ENCODE measurements at regions of chr6 and their contacts with region 1.

Region 1: GRCh38 chr6:159693128-159693893 is at the start of gene SOD2:
- DNase-seq: peak; percentile 93
- H3K4me3 ChIP-seq: peak within 1 kb of the TSS; percentile 64 to 100 (median 86)
- H3K27ac ChIP-seq: peak within 1 kb of the TSS; percentile 93 to 100 (median 98)
- H3K4me1 ChIP-seq: peaks cover 0 to 59% (median 41%) of the 10 kb centered on the region in 4 donors
- H3K27me3 ChIP-seq: no peaks in the 10 kb centered on the region
- CTCF ChIP-seq: no peak
- EP300 ChIP-seq: no peak
- POLR2A ChIP-seq: peak; percentile 94 to 96
- total RNA-seq, gene SOD2: 171 to 1,498 (median 369) TPM

Region 2: DNA sequence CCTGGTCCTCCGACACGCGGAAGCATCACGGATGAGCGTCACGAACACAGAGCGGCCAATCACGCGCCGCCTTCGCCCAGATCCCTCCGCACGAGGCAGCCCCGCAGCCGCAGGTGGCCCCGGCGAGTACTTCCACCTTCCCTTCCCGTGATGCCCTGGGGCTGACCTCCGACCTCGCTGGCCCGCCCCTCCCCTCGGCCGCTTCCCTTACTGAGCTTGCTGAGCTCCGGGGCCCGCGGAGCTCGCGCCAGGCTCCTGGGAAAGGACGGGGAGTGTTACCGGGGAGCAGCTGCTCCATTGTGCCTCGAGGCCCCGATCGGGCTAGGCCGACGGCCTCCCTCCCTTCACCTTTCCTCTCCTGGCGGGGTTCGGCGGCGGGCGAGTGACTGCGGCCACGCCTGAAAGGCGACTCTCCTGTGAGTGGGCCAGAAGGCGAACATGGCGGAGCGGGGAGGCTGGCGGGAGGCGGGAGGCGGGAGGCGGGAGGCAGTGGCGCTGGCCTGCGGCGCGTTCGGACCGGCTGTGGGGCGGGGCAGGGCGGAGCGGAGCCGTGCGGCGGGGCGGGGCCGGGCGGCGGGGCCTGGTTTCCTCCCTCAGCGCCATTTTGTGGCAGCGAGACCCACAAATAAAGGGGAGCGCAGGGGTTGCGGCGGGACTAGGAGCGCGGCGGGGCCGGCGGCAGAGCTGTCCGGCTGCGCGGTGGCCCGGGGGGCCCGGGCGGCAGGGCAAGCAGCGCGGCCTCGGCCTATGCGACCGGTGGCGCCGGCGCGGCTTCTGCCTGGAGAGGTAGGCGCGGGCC is 33.8 kb after region 1 on chr6 and contains the start of gene WTAP:
- intact Hi-C with region 1: loop called (anchors 2 kb)
- DNase-seq: peak; percentile 98
- H3K4me3 ChIP-seq: peak within 1 kb of the TSS; percentile 79 to 98 (median 92)
- H3K27ac ChIP-seq: peak within 1 kb of the TSS; percentile 97 to 100 (median 100)
- H3K4me1 ChIP-seq: peaks cover 0 to 49% (median 44%) of the 10 kb centered on the region in 4 donors
- H3K27me3 ChIP-seq: no peaks in the 10 kb centered on the region
- CTCF ChIP-seq: no peak
- EP300 ChIP-seq: peak in 1 of 4 donors; percentile 7
- POLR2A ChIP-seq: peak; percentile 22 to 79
- total RNA-seq, gene WTAP: 64.5 to 93.8 (median 75.6) TPM

Region 3: GRCh38 chr6:159761873-159762680 is 68.8 kb after region 1 on chr6 and contains the start of gene ACAT2:
- intact Hi-C with region 1: loop called (anchors 1 kb)
- DNase-seq: peak; percentile 99
- H3K4me3 ChIP-seq: peak within 1 kb of the TSS; percentile 74 to 99 (median 92)
- H3K27ac ChIP-seq: peak within 1 kb of the TSS; percentile 98 to 100 (median 100)
- H3K4me1 ChIP-seq: peaks cover 0 to 20% (median 12%) of the 10 kb centered on the region in 4 donors
- H3K27me3 ChIP-seq: no peaks in the 10 kb centered on the region
- CTCF ChIP-seq: no peak
- EP300 ChIP-seq: no peak
- POLR2A ChIP-seq: peak in 1 of 2 donors; percentile 65
- total RNA-seq, gene ACAT2: 4.1 to 12.1 (median 5.2) TPM

Region 4: GRCh38 chr6:159968440-159969203 is 275.3 kb after region 1 on chr6 and contains the start of gene IGF2R:
- intact Hi-C with region 1: loop called (anchors 5 kb)
- DNase-seq: peak; percentile 98
- H3K4me3 ChIP-seq: peak within 1 kb of the TSS; percentile 86 to 98 (median 92)
- H3K27ac ChIP-seq: peak within 1 kb of the TSS; percentile 83 to 94 (median 89)
- H3K4me1 ChIP-seq: peaks cover 0 to 37% (median 25%) of the 10 kb centered on the region in 4 donors
- H3K27me3 ChIP-seq: no peaks in the 10 kb centered on the region
- CTCF ChIP-seq: no peak
- EP300 ChIP-seq: peak in 1 of 4 donors; percentile 17
- POLR2A ChIP-seq: peak; percentile 49 to 53
- total RNA-seq, gene IGF2R: 34.6 to 80.9 (median 42.8) TPM

Measured in sigmoid colon (tissue), 7 donors.